Activated CD4-positive, alpha-beta memory T cell treated with anti-CD3 and anti-CD28 coated beads for 36 hours (primary cell): ENCODE measurements at regions of chr15 and their contacts with region 1.

Region 1: DNA sequence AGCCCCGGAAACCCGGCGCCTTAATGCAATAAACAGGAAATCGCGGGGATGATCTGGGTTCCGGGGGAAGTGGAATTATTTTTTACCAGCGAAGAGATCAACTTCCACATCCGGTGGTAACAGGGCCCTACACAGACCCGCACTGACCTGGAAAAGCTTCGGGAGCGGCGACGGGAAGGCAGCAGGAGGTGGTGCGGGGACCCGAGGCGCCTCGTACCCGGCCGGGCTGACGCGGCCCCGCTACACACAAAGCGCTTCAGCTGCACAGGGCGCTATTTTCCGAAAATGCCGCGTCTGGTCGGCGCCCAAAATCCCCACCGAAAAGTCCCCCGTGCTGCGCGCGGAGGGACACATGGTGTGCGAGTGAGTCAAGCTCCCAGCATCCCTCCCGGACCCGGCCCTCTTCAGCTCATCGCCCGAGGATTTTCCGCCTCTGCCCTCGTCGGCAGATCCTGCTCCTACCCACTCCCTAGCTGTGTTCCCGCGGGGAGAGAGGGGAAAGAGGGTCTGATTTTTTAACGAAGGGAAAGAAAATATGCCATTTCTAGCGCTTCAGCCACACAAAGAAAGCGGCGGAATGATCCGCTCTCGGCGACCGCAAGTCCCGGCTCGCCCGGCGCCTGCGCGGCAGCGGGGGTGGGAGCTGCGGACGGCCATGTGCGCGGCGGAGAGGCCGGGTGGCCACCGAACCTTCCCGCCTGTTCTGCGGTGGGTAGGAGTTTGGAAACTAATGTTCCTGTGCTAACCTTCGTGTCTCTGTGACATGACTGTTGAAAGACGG is at the start of gene GABPB1:
- DNase-seq: peak; percentile 92
- H3K4me3 Mint-ChIP-seq: peak within 1 kb of the TSS; percentile 90
- H3K27ac Mint-ChIP-seq: peak within 1 kb of the TSS; percentile 98
- H3K4me1 Mint-ChIP-seq: peaks cover 44% of the 10 kb centered on the region
- H3K27me3 Mint-ChIP-seq: peaks cover 2% of the 10 kb centered on the region
- total RNA-seq, gene GABPB1: 54.1 to 58.2 TPM

Region 2: GRCh38 chr15:49620658-49621368 is 734.2 kb before region 1 on chr15 and contains the starts of genes DTWD1 and FAM227B:
- CTCF ChIA-PET with region 1: no interaction called
- POLR2A ChIA-PET with region 1: no interaction called
- intact Hi-C with region 1: loop called (anchors 2 kb)
- DNase-seq: peak; percentile 96
- H3K4me3 Mint-ChIP-seq: peak within 1 kb of the TSS; percentile 94
- H3K27ac Mint-ChIP-seq: peak within 1 kb of the TSS; percentile 92
- H3K4me1 Mint-ChIP-seq: peaks cover 32% of the 10 kb centered on the region
- H3K27me3 Mint-ChIP-seq: no peaks in the 10 kb centered on the region
- total RNA-seq, gene DTWD1: 14.3 to 18.5 TPM
- total RNA-seq, gene FAM227B: 2.8 to 3.8 TPM

Region 3: DNA sequence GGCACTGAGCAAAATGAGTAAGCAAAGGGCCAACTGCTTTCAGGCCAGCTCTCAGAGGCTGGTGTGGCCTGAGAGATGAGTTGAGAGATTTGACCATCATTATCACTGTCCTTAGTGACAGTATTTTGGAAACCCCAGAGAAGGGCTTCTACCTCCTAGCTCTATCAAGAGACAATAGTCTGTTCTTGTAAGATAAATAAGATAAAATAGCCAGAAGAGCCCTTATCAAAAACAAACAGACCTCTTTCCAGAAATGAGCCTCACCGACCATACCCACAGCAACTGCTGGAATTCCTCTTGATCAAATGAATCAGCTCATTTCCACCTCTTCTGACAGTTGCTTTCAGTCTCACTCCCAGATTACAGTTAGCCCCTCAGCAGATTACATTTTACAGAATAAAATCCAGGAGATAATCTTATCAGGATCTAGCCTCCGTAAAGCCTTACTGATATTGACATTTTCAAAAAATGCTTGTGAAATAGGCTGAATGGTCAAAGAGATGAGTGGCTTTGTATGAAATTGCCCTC is 94.0 kb before region 1 on chr15:
- CTCF ChIA-PET with region 1: interaction called, 3 read pairs
- POLR2A ChIA-PET with region 1: interaction called, 14 read pairs
- intact Hi-C with region 1: loop called (anchors 1 kb)
- DNase-seq: peak; percentile 41
- H3K4me3 Mint-ChIP-seq: peak overlapping the region; percentile 53
- H3K27ac Mint-ChIP-seq: peak overlapping the region; percentile 99
- H3K4me1 Mint-ChIP-seq: peaks cover 68% of the 10 kb centered on the region
- H3K27me3 Mint-ChIP-seq: no peaks in the 10 kb centered on the region

Region 4: GRCh38 chr15:50424066-50424890 is 69.2 kb after region 1 on chr15 and contains the start of gene USP8:
- CTCF ChIA-PET with region 1: interaction called, 5 read pairs
- POLR2A ChIA-PET with region 1: interaction called, 20 read pairs
- intact Hi-C with region 1: loop called (anchors 1 kb)
- DNase-seq: peak; percentile 96
- H3K4me3 Mint-ChIP-seq: peak within 1 kb of the TSS; percentile 94
- H3K27ac Mint-ChIP-seq: peak within 1 kb of the TSS; percentile 82
- H3K4me1 Mint-ChIP-seq: peaks cover 29% of the 10 kb centered on the region
- H3K27me3 Mint-ChIP-seq: no peaks in the 10 kb centered on the region
- total RNA-seq, gene USP8: 43.4 to 46.0 TPM

Region 5: DNA sequence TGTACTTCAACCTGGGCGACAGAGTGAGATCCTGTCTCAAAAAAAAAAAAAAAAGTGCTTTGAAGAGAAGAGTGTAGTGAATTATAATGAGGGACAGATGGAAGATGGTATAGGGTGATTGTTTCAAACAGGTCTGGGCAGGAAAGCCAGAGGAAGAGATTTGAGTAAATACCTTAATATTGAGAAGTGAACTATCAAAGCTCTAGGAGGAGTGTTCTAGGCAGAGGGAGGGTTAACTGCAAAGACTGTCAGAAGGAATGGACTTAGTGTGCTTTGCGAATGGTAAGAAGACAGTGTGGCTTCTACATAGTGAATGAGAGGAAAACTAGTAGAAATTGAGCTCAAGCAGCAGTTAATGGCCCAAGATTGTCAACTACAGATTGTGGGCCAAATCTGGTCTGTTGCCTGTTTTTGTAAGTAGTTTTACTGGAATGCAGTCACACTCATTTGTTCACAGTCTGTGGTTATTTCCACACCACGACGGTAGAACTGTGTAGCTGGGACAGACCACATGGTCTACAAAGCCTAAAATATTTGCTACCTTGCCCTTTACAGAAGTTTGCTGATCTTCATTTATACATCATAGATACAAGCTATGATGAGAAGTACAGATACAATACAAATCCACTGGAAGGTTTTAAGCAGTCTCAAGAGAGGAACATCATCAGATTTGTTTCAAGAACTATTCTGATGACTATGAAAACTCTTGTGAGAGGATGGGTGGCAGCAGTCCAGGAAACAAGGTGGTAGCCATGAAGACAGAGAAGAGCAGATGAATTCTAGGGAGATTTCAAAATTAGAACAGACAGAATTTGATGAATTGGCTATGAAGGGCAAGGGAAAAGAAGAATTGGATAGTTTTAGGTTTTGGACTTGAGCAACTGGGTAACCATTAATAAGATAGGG is 208.0 kb after region 1 on chr15:
- CTCF ChIA-PET with region 1: no interaction called
- POLR2A ChIA-PET with region 1: interaction called, 4 read pairs
- intact Hi-C with region 1: loop called (anchors 5 kb)
- DNase-seq: peak; percentile 38
- H3K4me3 Mint-ChIP-seq: no peak overlapping the region
- H3K27ac Mint-ChIP-seq: peak overlapping the region; percentile 72
- H3K4me1 Mint-ChIP-seq: peaks cover 23% of the 10 kb centered on the region
- H3K27me3 Mint-ChIP-seq: no peaks in the 10 kb centered on the region

Region 6: GRCh38 chr15:50876989-50877360 is 521.9 kb after region 1 on chr15:
- CTCF ChIA-PET with region 1: no interaction called
- POLR2A ChIA-PET with region 1: interaction called, 10 read pairs
- intact Hi-C with region 1: no loop called
- DNase-seq: peak; percentile 70
- H3K4me3 Mint-ChIP-seq: peak overlapping the region; percentile 71
- H3K27ac Mint-ChIP-seq: peak overlapping the region; percentile 14
- H3K4me1 Mint-ChIP-seq: peaks cover 48% of the 10 kb centered on the region
- H3K27me3 Mint-ChIP-seq: peaks cover 3% of the 10 kb centered on the region

Region 7: DNA sequence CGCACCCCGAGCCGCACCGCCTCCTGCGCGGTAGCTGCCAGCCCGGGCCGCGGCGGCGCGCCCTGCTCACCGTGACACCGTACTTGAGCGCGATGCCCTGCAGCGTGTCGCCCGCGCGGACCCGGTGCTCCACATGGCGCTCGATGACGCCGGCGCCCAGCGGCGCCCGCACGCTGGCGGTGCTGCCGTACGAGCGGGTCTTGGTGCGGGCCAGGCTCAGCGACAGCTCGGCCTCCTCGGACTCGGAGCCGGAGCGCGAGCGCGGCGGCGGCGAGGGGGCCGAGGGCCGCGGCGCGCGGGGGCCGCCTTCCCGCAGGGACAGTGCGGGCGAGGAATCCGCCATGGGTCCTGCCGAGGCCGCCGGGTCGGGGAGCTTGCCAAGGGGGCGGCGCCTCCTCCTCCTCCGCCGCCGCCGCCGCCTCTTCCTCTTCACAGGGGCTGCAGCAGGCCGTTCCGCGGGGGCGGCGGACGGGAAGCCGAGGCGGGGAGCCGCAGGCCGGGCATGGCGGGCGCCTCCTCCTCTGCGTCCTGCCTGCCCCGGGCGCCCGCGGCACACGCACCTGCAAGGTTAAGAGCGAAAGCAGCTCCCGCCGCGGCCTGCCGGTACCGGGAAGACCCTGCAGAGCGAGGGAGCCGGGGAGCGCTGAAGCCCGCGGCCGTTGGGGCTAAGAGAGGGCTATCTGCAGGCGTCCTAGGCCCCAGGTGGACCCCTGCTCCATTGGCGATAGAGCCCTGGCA is 1382.4 kb after region 1 on chr15 and contains the start of gene LYSMD2:
- CTCF ChIA-PET with region 1: no interaction called
- POLR2A ChIA-PET with region 1: no interaction called
- intact Hi-C with region 1: loop called (anchors 5 kb)
- DNase-seq: peak; percentile 79
- H3K4me3 Mint-ChIP-seq: peak within 1 kb of the TSS; percentile 81
- H3K27ac Mint-ChIP-seq: peak within 1 kb of the TSS; percentile 85
- H3K4me1 Mint-ChIP-seq: peaks cover 55% of the 10 kb centered on the region
- H3K27me3 Mint-ChIP-seq: no peaks in the 10 kb centered on the region
- total RNA-seq, gene LYSMD2: 18.1 to 18.6 TPM